AG04449 (cell line): ENCODE measurements at regions of chr3 and their contacts with region 1.

Region 1: GRCh38 chr3:57397175-57398026 is 104.9 kb upstream of the ASB14 start:
- DNase-seq: no peak
- H3K4me3 ChIP-seq: no peak overlapping the region
- CTCF ChIP-seq: peak; percentile 81

Region 2: DNA sequence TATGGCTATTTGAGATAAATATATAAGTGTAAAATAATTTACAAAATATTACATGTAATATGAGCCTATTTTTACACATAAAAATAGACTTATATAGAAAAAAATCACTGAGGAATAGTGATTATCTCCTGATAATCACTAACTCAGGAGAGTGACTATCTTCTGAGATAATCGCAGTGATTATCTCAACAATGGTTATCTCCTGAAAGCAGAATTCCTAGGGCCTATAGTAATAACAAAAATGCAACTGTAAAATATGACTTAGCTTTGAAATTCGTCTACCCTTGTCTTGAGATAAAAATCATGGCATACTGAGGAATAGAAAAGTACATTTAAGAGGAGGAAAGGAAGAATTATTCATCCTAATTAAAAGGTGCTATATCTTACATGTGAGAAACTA is 12.1 kb after region 1 on chr3:
- CTCF ChIA-PET with region 1: interaction called, 16 read pairs
- POLR2A ChIA-PET with region 1: no interaction called
- DNase-seq: no peak
- H3K4me3 ChIP-seq: no peak overlapping the region
- CTCF ChIP-seq: no peak

Region 3: GRCh38 chr3:57717205-57717868 is 319.9 kb after region 1 on chr3:
- CTCF ChIA-PET with region 1: no interaction called
- POLR2A ChIA-PET with region 1: no interaction called
- DNase-seq: no peak
- H3K4me3 ChIP-seq: no peak overlapping the region
- CTCF ChIP-seq: no peak

Region 4: DNA sequence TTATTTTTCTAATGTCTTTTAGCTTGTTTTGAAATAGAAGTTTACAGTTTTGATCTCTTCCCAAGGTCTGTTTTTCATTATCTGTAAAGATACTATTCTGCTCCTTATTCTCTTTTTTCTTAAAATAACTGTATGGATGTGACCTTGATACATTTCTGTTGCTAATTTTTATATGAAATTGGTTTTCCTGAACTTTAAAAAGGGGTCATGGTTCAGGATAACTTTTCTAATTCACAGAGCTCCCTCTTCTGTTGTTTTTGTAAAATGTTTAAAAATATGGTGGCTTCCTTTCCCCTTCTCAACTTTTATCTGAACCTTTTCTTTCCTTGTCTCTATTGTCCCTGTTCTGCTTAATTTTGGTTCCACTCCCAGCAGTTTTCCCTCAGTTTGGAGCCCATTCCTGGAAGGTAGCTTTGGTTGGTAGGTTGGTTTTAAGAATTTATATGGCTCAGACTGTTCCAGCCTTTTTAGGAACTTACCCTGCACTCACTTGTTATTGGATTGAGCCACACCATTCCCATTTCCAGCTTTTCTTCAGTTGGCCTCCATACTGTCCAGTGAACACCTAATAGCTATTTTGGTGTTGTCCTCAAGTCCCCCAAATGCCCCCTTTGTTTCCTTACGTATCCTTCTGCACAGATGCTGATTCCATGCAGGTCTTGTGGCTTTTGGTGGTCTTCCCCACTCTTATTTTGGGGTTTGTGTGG is 429.0 kb after region 1 on chr3:
- CTCF ChIA-PET with region 1: interaction called, 15 read pairs
- POLR2A ChIA-PET with region 1: no interaction called
- DNase-seq: no peak
- H3K4me3 ChIP-seq: no peak overlapping the region
- CTCF ChIP-seq: no peak